Left ventricle myocardium superior (tissue), 1 donor: ENCODE measurements at regions of chr2 and their contacts with region 1.

Region 1: GRCh38 chr2:29295857-29296256 is 180.6 kb downstream of the CLIP4 start:
- DNase-seq: no peak
- ATAC-seq: peak; percentile 27

Region 2: GRCh38 chr2:28821295-28821958 is 474.4 kb before region 1 on chr2:
- intact Hi-C with region 1: no loop called
- DNase-seq: no peak
- ATAC-seq: peak; percentile 51

Region 3: GRCh38 chr2:28944535-28945248 is 351.2 kb before region 1 on chr2:
- intact Hi-C with region 1: no loop called
- DNase-seq: no peak
- ATAC-seq: no peak

Region 4: GRCh38 chr2:29351916-29352591 is 56.2 kb after region 1 on chr2:
- intact Hi-C with region 1: no loop called
- DNase-seq: no peak
- ATAC-seq: no peak

Region 5: GRCh38 chr2:29841386-29842004 is 545.6 kb after region 1 on chr2:
- intact Hi-C with region 1: loop called (anchors 10 kb)
- DNase-seq: no peak
- ATAC-seq: peak; percentile 54